ENCODE measurements at regions of chr1 and their contacts with region 1.

Region 1: DNA sequence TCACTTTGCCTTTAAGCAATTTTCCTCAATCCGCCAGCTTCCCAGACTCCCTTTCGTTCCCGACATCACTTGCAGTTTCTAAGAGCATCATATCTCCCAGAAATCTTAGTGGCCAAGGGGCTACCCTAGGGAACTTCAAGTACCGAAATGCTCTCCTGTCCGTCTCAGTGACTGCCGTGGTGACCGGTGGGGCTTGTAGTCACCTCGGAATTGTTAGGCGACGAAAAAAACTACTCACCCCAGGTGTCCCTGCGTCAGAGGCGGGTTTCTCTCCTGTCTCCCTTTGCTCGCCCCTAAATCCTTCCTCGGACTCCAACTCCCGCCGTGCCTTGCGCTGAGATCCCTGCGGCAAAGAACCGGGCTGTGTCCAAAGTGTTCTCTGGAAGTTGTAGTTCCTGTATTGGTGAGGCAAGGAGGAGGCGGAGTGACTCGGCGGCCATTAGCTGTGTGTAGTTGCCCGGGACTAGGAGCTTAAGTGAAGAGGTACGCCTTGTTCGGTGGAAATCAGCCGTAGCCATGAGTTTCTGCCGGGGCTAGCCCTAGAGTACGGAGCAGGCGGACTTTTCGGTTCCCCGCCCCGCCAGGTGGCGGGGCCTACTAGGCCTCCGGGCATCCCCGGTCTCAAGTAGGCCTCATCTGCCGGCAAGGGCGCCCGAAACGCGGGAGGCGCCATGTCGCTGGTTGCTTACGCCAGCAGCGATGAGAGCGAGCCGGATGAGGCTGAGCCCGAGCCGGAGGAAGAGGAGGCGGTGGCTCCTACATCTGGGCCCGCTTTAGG is at the start of gene PRCC:
- DNase-seq: peak; percentile 100
- ATAC-seq: peak; percentile 94
- H3K4me3 ChIP-seq: peak within 1 kb of the TSS; percentile 71
- H3K27ac ChIP-seq: peak within 1 kb of the TSS; percentile 78
- H3K4me1 ChIP-seq: peaks cover 5% of the 10 kb centered on the region
- H3K27me3 ChIP-seq: no peaks in the 10 kb centered on the region
- CTCF ChIP-seq: no peak
- POLR2A ChIP-seq: peak; percentile 71; the same call in 1 of the 2 replicates
- RAD21 ChIP-seq: no peak
- total RNA-seq, gene PRCC: 10.6 and 14.7 TPM in 2 replicates

Region 2: GRCh38 chr1:156705918-156706656 is 61.2 kb before region 1 on chr1:
- CTCF ChIA-PET with region 1: no interaction called
- POLR2A ChIA-PET with region 1: no interaction called
- dilution Hi-C with region 1: no loop called
- in situ Hi-C with region 1: no loop called
- intact Hi-C with region 1: no loop called
- DNase-seq: peak; percentile 34
- ATAC-seq: peak; percentile 24
- H3K4me3 ChIP-seq: peak overlapping the region; percentile 15; the same call in 1 of the 2 replicates
- H3K27ac ChIP-seq: peak overlapping the region; percentile 10; the same call in 1 of the 2 replicates
- H3K4me1 ChIP-seq: peaks cover 48% of the 10 kb centered on the region
- H3K27me3 ChIP-seq: peaks cover 5% of the 10 kb centered on the region
- CTCF ChIP-seq: peak; percentile 69
- POLR2A ChIP-seq: no peak
- RAD21 ChIP-seq: peak; percentile 61

Region 3: DNA sequence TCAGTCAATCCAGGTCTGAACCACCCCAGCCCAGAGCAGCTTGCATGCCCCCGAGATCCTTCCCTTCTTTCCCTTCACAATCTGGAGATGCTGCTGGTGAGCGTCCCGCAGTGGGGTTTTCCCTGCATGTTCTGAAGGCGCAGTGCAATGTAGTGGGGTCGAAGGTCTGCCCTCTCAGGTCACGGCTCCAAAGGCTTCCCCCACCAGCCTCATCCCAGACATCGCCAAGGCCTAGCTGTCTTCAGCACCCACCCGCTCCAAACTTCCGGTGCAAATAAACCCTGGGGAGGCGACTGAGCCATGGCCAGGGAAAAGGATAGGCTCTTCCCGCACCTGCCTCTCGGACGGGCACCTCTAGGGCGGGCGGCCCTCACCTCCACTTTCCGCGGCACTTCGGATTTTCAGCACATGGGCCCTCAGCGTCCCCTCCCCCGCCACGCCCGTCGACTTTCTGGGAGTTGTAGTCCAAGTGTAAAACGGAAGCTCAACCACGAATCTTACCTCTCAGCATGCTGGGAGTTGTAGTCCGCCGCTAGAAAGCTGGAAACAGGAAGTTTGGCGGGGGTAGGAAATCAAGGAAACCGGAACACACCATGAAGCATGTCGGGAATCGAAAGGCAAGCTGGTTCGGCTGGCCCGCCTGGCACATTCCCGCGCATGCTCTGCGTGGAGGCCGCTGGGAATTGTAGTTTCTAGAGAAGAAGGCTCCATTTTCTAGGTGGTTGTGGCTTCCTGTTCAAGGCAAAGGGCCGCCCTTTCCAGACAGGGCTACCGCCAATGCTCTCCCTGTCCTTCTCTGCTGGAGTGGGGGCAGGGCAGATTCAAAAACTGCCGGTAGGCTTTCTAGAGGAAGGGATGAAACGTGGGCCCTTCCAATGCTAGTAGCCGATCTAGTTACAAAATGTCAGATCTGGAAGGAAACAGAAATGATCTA is 26.3 kb before region 1 on chr1 and contains the start of gene MRPL24:
- CTCF ChIA-PET with region 1: no interaction called
- POLR2A ChIA-PET with region 1: interaction called, 18 read pairs
- dilution Hi-C with region 1: no loop called
- in situ Hi-C with region 1: no loop called
- intact Hi-C with region 1: loop called (anchors 1 kb)
- DNase-seq: peak; percentile 99
- ATAC-seq: peak; percentile 93
- H3K4me3 ChIP-seq: peak within 1 kb of the TSS; percentile 56
- H3K27ac ChIP-seq: peak within 1 kb of the TSS; percentile 62
- H3K4me1 ChIP-seq: peaks cover 2% of the 10 kb centered on the region; the same call in 1 of the 2 replicates
- H3K27me3 ChIP-seq: no peaks in the 10 kb centered on the region
- CTCF ChIP-seq: no peak
- POLR2A ChIP-seq: peak; percentile 55; the same call in 1 of the 2 replicates
- RAD21 ChIP-seq: no peak
- total RNA-seq, gene MRPL24: 65.3 and 68.8 TPM in 2 replicates

Region 4: GRCh38 chr1:156751758-156752757 is 15.2 kb before region 1 on chr1:
- CTCF ChIA-PET with region 1: interaction called, 3 read pairs
- POLR2A ChIA-PET with region 1: interaction called, 7 read pairs
- dilution Hi-C with region 1: no loop called
- in situ Hi-C with region 1: no loop called
- intact Hi-C with region 1: loop called (anchors 2 kb)
- DNase-seq: peak; percentile 95
- ATAC-seq: peak; percentile 74
- H3K4me3 ChIP-seq: peak overlapping the region; percentile 86
- H3K27ac ChIP-seq: peak overlapping the region; percentile 95
- H3K4me1 ChIP-seq: peaks cover 31% of the 10 kb centered on the region
- H3K27me3 ChIP-seq: no peaks in the 10 kb centered on the region
- CTCF ChIP-seq: peak; percentile 6; the same call in 1 of the 2 replicates
- POLR2A ChIP-seq: peak; percentile 29; the same call in 1 of the 2 replicates
- RAD21 ChIP-seq: no peak